ENCODE measurements at regions of chr6 and their contacts with region 1.

Region 1: GRCh38 chr6:3456755-3457466 is at the start of gene SLC22A23:
- DNase-seq: peak; percentile 63 to 84 (median 78)
- ATAC-seq: peak; percentile 81
- H3K4me3 ChIP-seq: peak within 1 kb of the TSS; percentile 66
- H3K4me3 Mint-ChIP-seq: peak within 1 kb of the TSS; percentile 76 to 95 (median 86)
- H3K27ac ChIP-seq: peak within 1 kb of the TSS; percentile 61
- H3K27ac Mint-ChIP-seq: peak within 1 kb of the TSS; percentile 32 to 91 (median 73)
- H3K4me1 ChIP-seq: peaks cover 8 to 24% of the 10 kb centered on the region in 2 donors
- H3K4me1 Mint-ChIP-seq: peaks cover 4 to 17% (median 12%) of the 10 kb centered on the region in 7 donors
- H3K27me3 ChIP-seq: peaks cover 0 to 4% of the 10 kb centered on the region in 2 donors
- H3K27me3 Mint-ChIP-seq: peaks cover 0 to 47% (median 8%) of the 10 kb centered on the region in 5 donors
- total RNA-seq, gene SLC22A23: 1.1 to 23.8 (median 20.0) TPM

Region 2: DNA sequence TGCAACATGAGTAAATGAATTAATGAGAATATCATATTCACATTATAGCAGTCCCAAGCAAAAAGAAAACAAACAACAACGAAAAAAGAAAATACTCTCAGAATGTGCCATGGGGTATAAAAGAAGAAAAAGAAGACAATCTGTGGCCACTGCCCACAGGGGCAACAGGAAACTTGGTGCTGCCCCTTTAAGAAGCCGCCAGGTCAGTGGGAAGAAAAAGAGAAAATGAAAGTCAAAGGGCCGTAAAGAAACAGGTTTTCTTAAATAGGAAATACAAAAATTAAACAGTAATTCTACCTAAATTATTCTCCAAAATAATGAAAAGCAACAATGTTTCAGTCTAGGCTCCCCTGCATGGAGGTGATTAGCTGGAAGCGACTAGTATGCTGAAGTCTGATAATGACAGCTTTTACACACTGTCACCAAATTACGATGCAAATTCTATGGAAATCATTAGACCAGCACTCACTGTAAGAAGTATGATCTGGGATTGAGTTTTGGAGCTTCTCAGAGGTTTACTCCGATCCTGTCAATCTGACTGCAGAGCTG is 1235.1 kb before region 1 on chr6:
- CTCF ChIA-PET with region 1: no interaction called
- POLR2A ChIA-PET with region 1: no interaction called
- intact Hi-C with region 1: no loop called
- DNase-seq: no peak
- ATAC-seq: peak; percentile 29
- H3K4me3 ChIP-seq: peak overlapping the region; percentile 53
- H3K4me3 Mint-ChIP-seq: peak overlapping the region; percentile 75 to 95 (median 88)
- H3K27ac ChIP-seq: peak overlapping the region; percentile 66
- H3K27ac Mint-ChIP-seq: peak overlapping the region; percentile 45 to 87 (median 84)
- H3K4me1 ChIP-seq: peaks cover 3 to 5% of the 10 kb centered on the region in 2 donors
- H3K4me1 Mint-ChIP-seq: peaks cover 19 to 41% (median 31%) of the 10 kb centered on the region in 7 donors
- H3K27me3 ChIP-seq: no peaks in the 10 kb centered on the region
- H3K27me3 Mint-ChIP-seq: no peaks in the 10 kb centered on the region

Region 3: GRCh38 chr6:3118353-3119039 is 338.4 kb before region 1 on chr6 and contains the start of gene BPHL:
- CTCF ChIA-PET with region 1: no interaction called
- POLR2A ChIA-PET with region 1: no interaction called
- intact Hi-C with region 1: loop called (anchors 2 to 10 kb)
- DNase-seq: peak; percentile 97 to 100 (median 99)
- ATAC-seq: peak; percentile 99
- H3K4me3 ChIP-seq: peak within 1 kb of the TSS; percentile 91
- H3K4me3 Mint-ChIP-seq: peak within 1 kb of the TSS; percentile 77 to 93 (median 90)
- H3K27ac ChIP-seq: peak within 1 kb of the TSS; percentile 97
- H3K27ac Mint-ChIP-seq: peak within 1 kb of the TSS; percentile 82 to 97 (median 95)
- H3K4me1 ChIP-seq: peaks cover 0 to 4% of the 10 kb centered on the region in 2 donors
- H3K4me1 Mint-ChIP-seq: peaks cover 12 to 19% (median 18%) of the 10 kb centered on the region in 7 donors
- H3K27me3 ChIP-seq: no peaks in the 10 kb centered on the region
- H3K27me3 Mint-ChIP-seq: peaks cover 0 to 5% (median 0%) of the 10 kb centered on the region in 5 donors
- total RNA-seq, gene BPHL: 7.9 to 18.0 (median 10.0) TPM

Region 4: DNA sequence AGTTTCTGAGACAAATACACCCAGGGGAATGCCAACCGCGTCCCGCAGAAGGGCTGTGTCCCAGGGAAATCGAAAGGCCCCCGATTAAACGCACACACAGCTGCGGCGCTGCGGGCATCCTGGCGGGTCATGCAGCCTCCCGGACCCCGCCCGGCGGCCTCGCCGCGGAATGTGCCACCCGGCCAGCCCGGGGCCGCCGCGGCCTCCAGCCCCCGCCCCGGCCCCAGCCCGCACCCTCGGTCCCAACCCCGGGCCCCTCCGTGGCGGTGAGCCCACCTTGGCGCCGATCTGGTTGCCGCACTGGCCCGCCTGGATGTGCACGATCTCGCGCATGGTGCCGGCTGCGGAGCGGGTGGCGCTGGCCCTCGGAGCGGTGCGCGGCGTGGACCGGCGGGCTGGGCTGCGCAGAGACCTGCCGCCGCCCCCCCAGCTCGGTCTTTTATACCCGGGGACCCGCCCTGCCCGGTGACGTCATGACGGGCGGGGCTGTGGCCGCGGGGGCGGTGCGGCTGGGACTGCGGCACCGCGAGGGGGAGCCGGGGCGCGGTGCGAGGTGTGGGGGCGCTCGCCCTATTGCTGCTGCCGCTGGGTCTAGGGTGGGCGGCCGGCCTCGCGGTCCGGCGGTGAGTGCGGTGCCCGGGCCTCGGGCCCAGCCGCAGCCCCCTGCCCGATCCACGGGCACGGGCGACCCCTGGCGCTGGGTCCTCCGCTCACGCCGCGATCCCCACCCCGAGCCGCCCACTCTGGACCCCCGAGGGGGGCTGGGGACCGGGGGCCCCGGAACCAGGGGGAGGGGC is 299.6 kb before region 1 on chr6 and contains the start of gene TUBB2A:
- CTCF ChIA-PET with region 1: no interaction called
- POLR2A ChIA-PET with region 1: no interaction called
- intact Hi-C with region 1: loop called in 1 of 2 experiments (anchors 1 kb)
- DNase-seq: peak; percentile 83 to 96 (median 90)
- ATAC-seq: peak; percentile 87
- H3K4me3 ChIP-seq: peak within 1 kb of the TSS; percentile 61
- H3K4me3 Mint-ChIP-seq: peak within 1 kb of the TSS; percentile 81 to 94 (median 92)
- H3K27ac ChIP-seq: peak within 1 kb of the TSS; percentile 86
- H3K27ac Mint-ChIP-seq: peak within 1 kb of the TSS; percentile 75 to 96 (median 93)
- H3K4me1 ChIP-seq: peaks cover 15 to 17% of the 10 kb centered on the region in 2 donors
- H3K4me1 Mint-ChIP-seq: peaks cover 4 to 37% (median 33%) of the 10 kb centered on the region in 7 donors
- H3K27me3 ChIP-seq: no peaks in the 10 kb centered on the region
- H3K27me3 Mint-ChIP-seq: peaks cover 0 to 52% (median 4%) of the 10 kb centered on the region in 5 donors
- total RNA-seq, gene TUBB2A: 2.2 to 39.6 (median 3.1) TPM

Region 5: GRCh38 chr6:3281631-3282475 is 175.1 kb before region 1 on chr6:
- CTCF ChIA-PET with region 1: interaction called, 5 read pairs
- POLR2A ChIA-PET with region 1: interaction called, 3 read pairs
- intact Hi-C with region 1: loop called (anchors 1 to 2 kb)
- DNase-seq: no peak
- ATAC-seq: no peak
- H3K4me3 ChIP-seq: no peak overlapping the region
- H3K4me3 Mint-ChIP-seq: no peak overlapping the region
- H3K27ac ChIP-seq: no peak overlapping the region
- H3K27ac Mint-ChIP-seq: no peak overlapping the region
- H3K4me1 ChIP-seq: peaks cover 0 to 5% of the 10 kb centered on the region in 2 donors
- H3K4me1 Mint-ChIP-seq: peaks cover 0 to 6% (median 4%) of the 10 kb centered on the region in 7 donors
- H3K27me3 ChIP-seq: no peaks in the 10 kb centered on the region
- H3K27me3 Mint-ChIP-seq: no peaks in the 10 kb centered on the region

Region 6: GRCh38 chr6:3372007-3372846 is 84.7 kb before region 1 on chr6:
- CTCF ChIA-PET with region 1: no interaction called
- POLR2A ChIA-PET with region 1: no interaction called
- intact Hi-C with region 1: loop called in 1 of 2 experiments (anchors 1 kb)
- DNase-seq: no peak
- ATAC-seq: no peak
- H3K4me3 ChIP-seq: no peak overlapping the region
- H3K4me3 Mint-ChIP-seq: peak overlapping the region in 1 of 10 donors; percentile 24
- H3K27ac ChIP-seq: no peak overlapping the region
- H3K27ac Mint-ChIP-seq: peak overlapping the region in 7 of 9 donors; percentile 48 to 98 (median 89)
- H3K4me1 ChIP-seq: peaks cover 6 to 22% of the 10 kb centered on the region in 2 donors
- H3K4me1 Mint-ChIP-seq: peaks cover 5 to 66% (median 52%) of the 10 kb centered on the region in 7 donors
- H3K27me3 ChIP-seq: no peaks in the 10 kb centered on the region
- H3K27me3 Mint-ChIP-seq: peaks cover 0 to 2% (median 0%) of the 10 kb centered on the region in 5 donors

Region 7: GRCh38 chr6:3382326-3383279 is 74.3 kb before region 1 on chr6:
- CTCF ChIA-PET with region 1: no interaction called
- POLR2A ChIA-PET with region 1: no interaction called
- intact Hi-C with region 1: no loop called
- DNase-seq: no peak
- ATAC-seq: no peak
- H3K4me3 ChIP-seq: no peak overlapping the region
- H3K4me3 Mint-ChIP-seq: no peak overlapping the region
- H3K27ac ChIP-seq: no peak overlapping the region
- H3K27ac Mint-ChIP-seq: no peak overlapping the region
- H3K4me1 ChIP-seq: peaks cover 0 to 13% of the 10 kb centered on the region in 2 donors
- H3K4me1 Mint-ChIP-seq: peaks cover 5 to 38% (median 23%) of the 10 kb centered on the region in 7 donors
- H3K27me3 ChIP-seq: no peaks in the 10 kb centered on the region
- H3K27me3 Mint-ChIP-seq: peaks cover 0 to 2% (median 0%) of the 10 kb centered on the region in 5 donors

Region 8: DNA sequence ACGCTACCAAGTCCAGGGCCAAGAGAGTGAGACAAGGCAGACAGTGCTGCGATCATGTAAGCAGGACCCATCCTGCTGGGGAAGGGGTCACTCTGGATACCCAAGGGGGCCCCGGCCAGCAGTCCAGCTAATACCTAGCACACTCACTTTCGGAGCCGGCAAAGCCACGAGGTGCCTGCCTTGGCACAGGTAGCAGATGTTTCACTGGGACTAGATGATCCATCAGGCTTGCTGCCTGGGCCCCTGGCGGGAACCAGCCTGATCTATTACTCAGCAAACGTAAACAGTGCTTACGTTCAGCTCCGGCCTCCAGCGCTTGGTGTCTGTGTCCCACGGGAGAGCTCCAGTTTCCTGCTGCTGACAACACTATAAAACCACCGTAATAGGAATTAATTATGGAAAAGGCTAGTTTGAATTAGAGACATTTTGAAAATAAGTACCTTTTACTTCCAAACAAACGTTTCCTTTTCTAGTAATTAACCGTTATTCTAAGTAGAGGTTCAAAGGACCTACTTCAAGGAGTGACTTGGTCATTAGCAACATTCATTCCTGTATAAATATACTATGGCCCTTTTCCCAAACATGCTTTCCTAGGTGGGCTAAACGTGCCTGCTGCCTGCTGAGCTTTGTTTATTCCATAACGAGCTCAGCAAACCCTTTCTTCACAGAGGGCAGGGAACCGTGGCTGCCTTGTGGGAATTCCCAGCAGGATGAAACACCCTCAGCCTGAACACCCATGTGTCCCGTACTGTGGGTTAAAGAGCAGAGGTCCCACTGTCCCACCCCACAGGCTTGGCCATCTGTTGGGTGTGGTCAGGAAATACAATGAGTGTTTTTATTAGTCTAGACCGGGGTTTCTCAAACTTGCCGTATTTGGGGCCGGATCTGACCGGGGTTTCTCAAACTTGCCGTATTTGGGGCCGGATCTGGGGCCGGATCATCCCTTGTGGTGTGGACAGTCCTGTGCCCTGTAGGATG is 18.4 kb before region 1 on chr6:
- CTCF ChIA-PET with region 1: interaction called, 8 read pairs
- POLR2A ChIA-PET with region 1: interaction called, 5 read pairs
- intact Hi-C with region 1: loop called in 1 of 2 experiments (anchors 2 kb)
- DNase-seq: no peak
- ATAC-seq: no peak
- H3K4me3 ChIP-seq: no peak overlapping the region
- H3K4me3 Mint-ChIP-seq: no peak overlapping the region
- H3K27ac ChIP-seq: no peak overlapping the region
- H3K27ac Mint-ChIP-seq: peak overlapping the region in 1 of 9 donors; percentile 36
- H3K4me1 ChIP-seq: no peaks in the 10 kb centered on the region
- H3K4me1 Mint-ChIP-seq: peaks cover 0 to 39% (median 7%) of the 10 kb centered on the region in 7 donors
- H3K27me3 ChIP-seq: no peaks in the 10 kb centered on the region
- H3K27me3 Mint-ChIP-seq: peaks cover 0 to 2% (median 0%) of the 10 kb centered on the region in 5 donors

Measured in naive thymus-derived CD4-positive, alpha-beta T cell (primary cell).